Vagina (tissue), 2 donors: ENCODE measurements at regions of chr15 and their contacts with region 1.

Region 1: GRCh38 chr15:83559310-83559966 is 94.5 kb upstream of the ADAMTSL3 start:
- DNase-seq: no peak
- H3K4me3 ChIP-seq: no peak overlapping the region
- H3K27ac ChIP-seq: no peak overlapping the region
- H3K4me1 ChIP-seq: no peaks in the 10 kb centered on the region
- H3K27me3 ChIP-seq: no peaks in the 10 kb centered on the region
- CTCF ChIP-seq: peak; percentile 58 to 71 (median 70)
- POLR2A ChIP-seq: no peak

Region 2: DNA sequence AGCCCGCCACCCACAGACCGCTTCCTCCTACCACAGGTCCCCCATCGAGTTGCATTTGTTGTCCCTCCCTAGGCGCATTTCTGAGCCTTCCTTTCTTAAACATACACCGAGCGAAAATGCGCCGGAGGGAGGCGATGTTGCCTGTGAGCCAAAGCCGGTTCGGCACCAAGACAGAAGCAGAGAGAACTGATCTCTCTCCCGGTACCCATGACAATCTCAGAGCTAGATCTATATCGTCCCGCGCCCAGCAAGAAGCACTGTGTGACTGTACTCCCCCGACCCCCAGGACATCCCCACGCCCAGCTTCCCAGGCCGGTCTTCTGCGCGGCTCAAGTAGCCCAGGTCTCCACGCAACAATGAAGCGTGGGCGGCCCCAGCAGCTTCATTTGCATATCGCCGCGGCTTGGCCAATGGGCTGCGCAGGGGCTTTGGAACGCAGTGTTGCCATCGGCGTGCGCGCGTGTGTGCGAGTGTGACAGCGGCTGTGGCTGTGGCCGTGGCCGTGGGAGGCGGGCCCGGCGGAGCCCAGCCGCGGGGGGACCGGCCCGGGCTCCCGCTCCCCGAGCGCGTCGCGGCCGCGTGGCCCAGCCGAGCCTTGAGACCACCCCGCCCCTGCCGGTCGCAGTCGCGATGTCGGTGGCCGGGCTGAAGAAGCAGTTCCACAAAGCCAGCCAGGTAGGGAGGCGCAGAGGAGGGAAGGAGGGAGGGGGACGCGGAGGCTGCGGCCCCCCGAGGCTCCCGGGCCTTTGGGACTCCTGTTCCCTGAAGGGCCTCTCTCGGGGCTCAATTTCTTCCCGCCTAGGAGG is 112.3 kb before region 1 on chr15 and contains the start of gene SH3GL3:
- intact Hi-C with region 1: loop called (anchors 10 kb)
- DNase-seq: no peak
- H3K4me3 ChIP-seq: peak within 1 kb of the TSS; percentile 54 to 55
- H3K27ac ChIP-seq: no peak within 1 kb of the TSS
- H3K4me1 ChIP-seq: peaks cover 8% of the 10 kb centered on the region
- H3K27me3 ChIP-seq: no peaks in the 10 kb centered on the region
- CTCF ChIP-seq: peak in 1 of 3 experiments; percentile 26
- POLR2A ChIP-seq: no peak
- total RNA-seq, gene SH3GL3: 3.9 TPM